Lower leg skin (tissue), 4 donors: ENCODE measurements at regions of chr10 and their contacts with region 1.

Region 1: GRCh38 chr10:14889318-14889717 is 10.7 kb downstream of the SUV39H2 start:
- DNase-seq: no peak
- H3K4me3 ChIP-seq: no peak overlapping the region
- CTCF ChIP-seq: no peak
- POLR2A ChIP-seq: no peak

Region 2: DNA sequence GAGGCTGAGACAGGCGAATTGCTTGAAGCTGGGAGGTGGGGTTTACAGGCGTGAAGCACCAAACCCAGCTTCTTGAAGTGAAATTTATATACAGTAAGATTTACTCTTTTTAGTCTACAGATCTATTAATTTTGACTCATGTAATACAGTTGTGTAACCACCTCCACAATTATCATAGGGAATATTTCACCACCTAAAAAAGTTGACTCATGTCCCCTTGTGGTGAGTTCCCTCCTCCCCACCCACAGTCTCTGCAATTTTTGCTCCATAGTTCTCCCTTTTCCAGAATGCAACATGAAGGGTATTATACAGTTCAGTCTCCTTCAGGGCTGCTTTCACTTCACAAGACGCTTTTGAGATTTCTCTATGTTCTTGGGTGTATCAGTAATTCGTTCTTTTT is 271.5 kb before region 1 on chr10:
- intact Hi-C with region 1: no loop called
- DNase-seq: peak in 1 of 2 donors; percentile 5
- H3K4me3 ChIP-seq: no peak overlapping the region
- CTCF ChIP-seq: no peak
- POLR2A ChIP-seq: no peak

Region 3: DNA sequence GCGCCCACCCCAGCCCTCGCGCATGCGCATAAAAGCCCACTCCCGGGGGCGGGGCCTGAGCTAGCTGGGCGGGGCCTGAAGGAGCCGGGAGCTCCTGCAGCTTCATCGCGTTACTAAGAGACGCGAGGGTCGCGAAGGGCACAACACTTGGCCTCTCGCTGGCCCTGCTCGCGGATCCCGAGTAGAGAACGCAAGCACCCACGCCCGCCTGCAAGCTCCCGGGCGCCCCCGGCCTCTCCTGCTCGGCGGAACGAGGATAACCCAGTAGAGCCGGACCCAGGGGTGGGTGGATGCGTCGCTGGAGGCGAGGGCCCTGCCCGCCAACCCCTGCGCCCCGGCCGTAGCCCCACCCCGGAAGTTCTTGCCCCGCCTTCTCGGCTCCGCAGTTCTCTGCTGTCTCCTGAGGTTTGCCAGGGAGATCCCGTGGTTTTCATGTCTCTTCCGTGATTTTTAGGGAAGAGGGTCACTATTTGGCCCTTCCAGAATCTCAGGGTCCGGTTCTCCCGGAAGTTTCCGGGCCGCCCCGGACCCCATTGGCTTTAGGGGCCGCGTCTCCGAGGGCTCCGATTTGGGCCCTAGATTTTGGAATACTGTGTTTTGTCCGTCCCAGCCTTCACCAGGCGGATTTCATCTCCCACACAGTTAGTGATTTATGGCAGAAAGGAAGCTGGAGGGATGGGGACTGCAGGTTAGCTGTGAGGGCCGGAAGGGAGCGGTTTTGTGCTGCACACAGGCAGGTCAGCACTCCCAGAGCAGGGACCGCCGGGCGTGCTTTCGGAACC is 70.1 kb after region 1 on chr10 and contains the start of gene MEIG1:
- intact Hi-C with region 1: loop called (anchors 10 kb)
- DNase-seq: peak; percentile 91 to 98
- H3K4me3 ChIP-seq: peak within 1 kb of the TSS; percentile 47
- CTCF ChIP-seq: no peak
- POLR2A ChIP-seq: no peak
- total RNA-seq, gene MEIG1: not detected

Region 4: GRCh38 chr10:15267496-15267895 is 378.2 kb after region 1 on chr10:
- intact Hi-C with region 1: no loop called
- DNase-seq: peak in 1 of 2 donors; percentile 21
- H3K4me3 ChIP-seq: no peak overlapping the region
- CTCF ChIP-seq: no peak
- POLR2A ChIP-seq: no peak

Region 5: GRCh38 chr10:15349112-15349511 is 459.8 kb after region 1 on chr10:
- intact Hi-C with region 1: no loop called
- DNase-seq: peak in 1 of 2 donors; percentile 32
- H3K4me3 ChIP-seq: no peak overlapping the region
- CTCF ChIP-seq: no peak
- POLR2A ChIP-seq: no peak